ENCODE measurements at regions of chr17 and their contacts with region 1.

Region 1: DNA sequence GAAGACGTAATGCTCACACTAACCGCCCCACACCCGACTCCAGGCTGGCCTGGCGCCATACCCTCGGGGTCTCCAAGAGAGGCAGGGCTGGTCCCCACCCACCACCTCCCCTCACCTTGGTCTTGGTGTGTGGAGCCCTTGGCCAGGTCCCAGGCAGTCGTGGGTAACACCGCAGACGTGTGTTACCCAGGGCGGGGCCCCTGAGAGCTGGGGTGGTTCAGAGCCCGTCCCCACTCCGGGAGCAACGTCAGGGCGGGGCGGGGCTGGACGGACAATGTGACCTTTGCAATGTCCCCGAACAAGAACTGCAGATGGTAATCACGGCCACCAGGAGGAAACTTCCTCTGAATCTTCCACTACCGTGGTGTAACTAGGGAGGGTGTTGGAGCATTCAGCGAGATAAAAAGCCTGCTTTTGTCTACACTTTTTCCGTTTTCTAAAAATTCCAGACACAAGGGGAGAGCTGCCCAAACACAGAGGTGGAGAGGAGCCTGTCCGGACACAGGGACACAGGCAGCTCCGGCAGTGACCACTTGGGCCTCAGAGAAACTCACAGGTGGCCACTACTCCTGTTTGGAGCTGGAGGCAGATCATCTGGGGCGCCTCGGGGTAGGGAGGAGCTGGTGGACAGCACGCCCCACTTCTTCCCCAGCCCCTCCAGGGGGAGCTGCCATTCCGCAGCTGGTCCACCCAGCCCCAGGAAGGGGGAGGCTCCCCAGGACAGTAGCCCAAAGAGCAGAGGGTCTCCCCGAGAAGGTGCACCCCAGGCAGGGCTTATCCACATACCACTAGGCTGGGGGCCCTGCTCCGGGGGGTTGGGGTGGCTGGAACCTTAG is 14.2 kb upstream of the SLC38A10 start:
- DNase-seq: peak; percentile 90 to 95 (median 94)
- ATAC-seq: peak; percentile 91 to 95 (median 93)
- H3K4me3 ChIP-seq: peak overlapping the region; percentile 5 to 62 (median 50)
- H3K27ac ChIP-seq: peak overlapping the region; percentile 58 to 85 (median 78)
- H3K4me1 ChIP-seq: peaks cover 4 to 33% (median 17%) of the 10 kb centered on the region in 12 donors
- H3K27me3 ChIP-seq: no peaks in the 10 kb centered on the region
- CTCF ChIP-seq: peak in 11 of 12 donors; percentile 36 to 65 (median 48)
- POLR2A ChIP-seq: peak in 1 of 2 donors; percentile 67

Region 2: DNA sequence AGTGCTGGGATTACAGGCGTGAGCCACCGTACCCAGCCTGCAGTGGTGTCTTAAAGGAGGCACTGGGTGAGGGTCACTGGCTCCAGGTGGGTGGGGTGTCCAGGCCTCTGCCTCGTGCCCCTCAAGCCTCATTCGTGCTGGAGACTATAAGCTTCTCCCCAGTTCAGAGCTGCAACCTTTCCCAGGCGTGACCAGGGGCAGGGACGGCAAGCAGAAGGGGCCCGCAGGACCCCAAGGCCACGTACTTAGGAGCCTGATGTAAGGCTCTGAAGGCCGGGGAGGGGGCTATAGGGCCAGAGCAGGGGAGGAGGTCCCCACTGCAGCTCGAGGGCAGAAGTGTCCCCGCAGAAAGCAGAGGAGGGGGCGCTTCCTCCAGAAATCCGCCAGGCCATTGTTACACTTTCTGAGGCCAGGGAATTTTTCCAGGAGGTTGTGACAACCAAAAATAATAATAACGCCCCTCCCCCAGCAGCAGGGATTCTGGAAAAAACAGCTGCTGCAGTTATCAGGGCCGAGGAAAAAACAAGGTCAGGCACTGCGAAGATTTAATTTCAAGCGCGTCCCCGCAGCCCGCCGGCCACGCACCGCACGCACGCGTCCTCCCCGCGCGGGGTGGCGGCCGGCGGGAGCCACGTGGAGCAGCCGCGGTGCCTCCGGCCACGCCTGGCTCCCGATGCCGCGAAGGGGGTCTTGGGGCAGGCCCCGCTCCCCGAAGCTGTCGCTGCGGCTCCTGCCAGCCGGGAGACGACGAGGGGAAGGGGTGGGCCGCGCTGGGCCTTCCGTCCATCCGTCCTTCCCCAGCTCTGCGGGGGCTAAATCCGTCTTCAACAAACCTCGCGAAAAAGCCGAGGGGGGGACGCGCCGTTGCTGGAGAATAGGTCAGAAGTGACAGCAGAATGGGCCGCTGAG is 31.6 kb after region 1 on chr17:
- intact Hi-C with region 1: loop called in 1 of 10 experiments (anchors 1 kb)
- DNase-seq: peak in 3 of 5 donors; percentile 67 to 73 (median 68)
- ATAC-seq: no peak
- H3K4me3 ChIP-seq: peak overlapping the region; percentile 33 to 93 (median 82)
- H3K27ac ChIP-seq: peak overlapping the region; percentile 94 to 99 (median 97)
- H3K4me1 ChIP-seq: peaks cover 6 to 63% (median 41%) of the 10 kb centered on the region in 12 donors
- H3K27me3 ChIP-seq: peaks cover 0 to 35% (median 0%) of the 10 kb centered on the region in 9 donors
- CTCF ChIP-seq: no peak
- POLR2A ChIP-seq: peak in 1 of 2 donors; percentile 24

Region 3: DNA sequence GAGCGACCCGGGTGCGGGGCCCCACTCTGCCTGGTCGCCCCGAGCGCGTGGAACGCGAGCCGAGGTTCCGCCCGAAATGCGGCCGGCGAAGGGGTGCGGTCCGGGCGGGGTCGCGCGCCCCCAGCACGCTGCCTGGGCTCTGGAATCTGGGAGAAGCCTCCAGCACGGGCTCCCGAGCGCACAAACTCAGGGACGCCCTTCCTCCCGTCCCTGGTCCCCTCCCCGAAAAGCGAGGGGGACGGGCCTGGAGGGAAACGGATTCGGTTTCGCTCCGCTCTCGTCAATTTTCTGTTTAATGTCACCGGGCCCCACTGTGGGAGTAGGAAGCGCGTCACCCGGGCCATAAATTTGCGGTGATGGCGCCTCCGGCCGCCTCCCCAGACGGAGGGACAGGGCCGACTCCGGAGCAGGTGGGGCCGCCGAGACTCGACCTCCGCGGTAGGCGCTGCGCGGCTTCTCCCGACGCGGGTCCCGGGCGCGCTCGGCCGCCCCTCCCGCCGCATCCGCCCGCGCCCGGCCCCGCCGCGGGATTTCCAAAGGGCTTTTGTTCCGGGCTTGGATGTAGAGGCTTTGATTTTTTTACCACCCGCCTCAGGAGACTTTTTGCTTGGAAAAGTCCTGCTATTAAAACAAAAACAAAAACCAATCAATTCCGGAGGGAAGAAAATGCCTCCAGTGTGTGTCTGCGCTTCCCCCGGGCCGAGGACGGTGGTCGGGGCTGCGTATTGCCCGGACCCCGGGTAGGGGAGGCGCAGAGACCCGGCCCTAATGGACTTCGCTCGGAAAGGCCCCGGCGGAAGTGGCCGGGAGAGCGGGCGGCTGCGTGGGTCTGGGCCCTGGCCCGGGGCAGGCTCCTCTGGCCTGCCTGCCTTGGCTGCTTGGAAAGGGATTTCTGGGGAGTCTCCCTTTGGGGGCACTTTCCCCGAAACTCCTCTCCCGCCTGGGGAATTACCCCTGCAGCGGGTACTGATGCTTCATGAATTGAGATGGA is 78.1 kb after region 1 on chr17:
- intact Hi-C with region 1: loop called in 2 of 10 experiments (anchors 5 to 10 kb)
- DNase-seq: peak in 4 of 5 donors; percentile 71 to 83 (median 78)
- ATAC-seq: peak; percentile 6 to 71 (median 45)
- H3K4me3 ChIP-seq: peak overlapping the region; percentile 61 to 91 (median 77)
- H3K27ac ChIP-seq: peak overlapping the region; percentile 79 to 100 (median 97)
- H3K4me1 ChIP-seq: peaks cover 5 to 66% (median 46%) of the 10 kb centered on the region in 12 donors
- H3K27me3 ChIP-seq: peaks cover 0 to 5% (median 0%) of the 10 kb centered on the region in 9 donors
- CTCF ChIP-seq: no peak
- POLR2A ChIP-seq: peak in 1 of 2 donors; percentile 48